ENCODE measurements at regions of chr6 and their contacts with region 1.

Region 1: DNA sequence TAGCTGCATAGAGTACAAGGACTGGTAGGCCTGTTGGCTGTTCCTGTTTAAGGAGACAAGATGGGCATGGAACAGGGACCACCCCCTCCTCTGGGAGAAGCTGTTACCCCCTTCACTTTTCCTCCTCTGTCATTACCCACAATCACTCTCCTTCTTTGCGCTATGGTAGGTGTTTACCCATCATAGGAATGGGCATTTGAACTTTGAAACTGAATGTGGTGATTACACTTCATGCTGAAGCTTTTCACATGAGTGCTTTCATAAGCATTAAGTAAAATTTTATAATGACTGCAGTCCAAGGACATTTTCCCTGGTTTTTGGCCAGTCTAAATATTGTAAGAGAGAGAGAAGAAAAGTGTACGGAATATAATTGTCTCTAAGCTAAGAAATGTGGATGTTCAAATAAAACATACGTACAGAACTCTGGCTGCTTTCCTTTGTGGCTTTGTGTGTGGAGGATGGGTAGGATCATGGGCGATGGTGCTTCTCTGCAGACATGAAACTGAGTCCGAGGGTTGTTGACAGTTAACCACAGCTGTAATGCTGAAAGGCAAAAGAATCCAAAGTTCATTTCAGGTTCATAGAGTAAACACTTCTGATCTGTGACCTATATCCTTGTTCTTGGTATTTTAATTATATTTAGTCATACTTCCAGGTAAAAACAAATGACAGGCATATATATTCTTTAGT is 56.3 kb downstream of the CCN2 start:
- H3K4me3 ChIP-seq: no peak overlapping the region
- H3K27ac ChIP-seq: no peak overlapping the region
- H3K4me1 ChIP-seq: no peaks in the 10 kb centered on the region
- CTCF ChIP-seq: no peak

Region 2: GRCh38 chr6:131773284-131773950 is 121.5 kb before region 1 on chr6:
- CTCF ChIA-PET with region 1: no interaction called
- POLR2A ChIA-PET with region 1: interaction called, 10 read pairs
- H3K4me3 ChIP-seq: no peak overlapping the region
- H3K27ac ChIP-seq: no peak overlapping the region
- H3K4me1 ChIP-seq: no peaks in the 10 kb centered on the region
- CTCF ChIP-seq: no peak